ENCODE measurements at regions of chr19 and their contacts with region 1.

Region 1: GRCh38 chr19:45523642-45524256 is 16.5 kb downstream of the VASP start:
- DNase-seq: peak; percentile 55 to 80 (median 77)
- ATAC-seq: peak; percentile 90 to 96 (median 93)
- H3K4me3 ChIP-seq: no peak overlapping the region
- H3K27ac ChIP-seq: no peak overlapping the region
- H3K4me1 ChIP-seq: peaks cover 0 to 26% (median 0%) of the 10 kb centered on the region in 4 donors
- H3K27me3 ChIP-seq: no peaks in the 10 kb centered on the region
- CTCF ChIP-seq: peak; percentile 83 to 92 (median 89)
- POLR2A ChIP-seq: no peak

Region 2: DNA sequence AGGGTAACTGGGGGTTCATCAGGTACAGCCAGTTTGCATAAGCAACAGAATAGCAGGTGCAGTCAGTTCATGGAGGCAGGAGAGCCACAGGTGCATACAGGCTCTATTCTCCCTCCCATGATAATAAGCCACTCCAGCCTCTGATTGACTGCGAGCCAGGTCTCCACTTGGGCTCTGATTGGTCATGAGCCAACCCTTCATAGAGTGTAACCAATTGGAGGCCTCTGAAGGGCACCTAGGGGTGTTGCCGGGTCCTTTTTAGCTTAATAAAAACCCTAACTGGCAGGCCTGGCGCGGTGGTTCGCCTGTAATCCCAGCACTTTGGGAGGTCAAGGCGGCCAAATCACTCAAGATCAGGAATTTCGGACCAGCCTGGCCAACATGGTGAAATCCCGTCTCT is 192.3 kb before region 1 on chr19:
- intact Hi-C with region 1: no loop called
- DNase-seq: no peak
- ATAC-seq: no peak
- H3K4me3 ChIP-seq: no peak overlapping the region
- H3K27ac ChIP-seq: no peak overlapping the region
- H3K4me1 ChIP-seq: no peaks in the 10 kb centered on the region
- H3K27me3 ChIP-seq: no peaks in the 10 kb centered on the region
- CTCF ChIP-seq: no peak
- POLR2A ChIP-seq: no peak

Region 3: DNA sequence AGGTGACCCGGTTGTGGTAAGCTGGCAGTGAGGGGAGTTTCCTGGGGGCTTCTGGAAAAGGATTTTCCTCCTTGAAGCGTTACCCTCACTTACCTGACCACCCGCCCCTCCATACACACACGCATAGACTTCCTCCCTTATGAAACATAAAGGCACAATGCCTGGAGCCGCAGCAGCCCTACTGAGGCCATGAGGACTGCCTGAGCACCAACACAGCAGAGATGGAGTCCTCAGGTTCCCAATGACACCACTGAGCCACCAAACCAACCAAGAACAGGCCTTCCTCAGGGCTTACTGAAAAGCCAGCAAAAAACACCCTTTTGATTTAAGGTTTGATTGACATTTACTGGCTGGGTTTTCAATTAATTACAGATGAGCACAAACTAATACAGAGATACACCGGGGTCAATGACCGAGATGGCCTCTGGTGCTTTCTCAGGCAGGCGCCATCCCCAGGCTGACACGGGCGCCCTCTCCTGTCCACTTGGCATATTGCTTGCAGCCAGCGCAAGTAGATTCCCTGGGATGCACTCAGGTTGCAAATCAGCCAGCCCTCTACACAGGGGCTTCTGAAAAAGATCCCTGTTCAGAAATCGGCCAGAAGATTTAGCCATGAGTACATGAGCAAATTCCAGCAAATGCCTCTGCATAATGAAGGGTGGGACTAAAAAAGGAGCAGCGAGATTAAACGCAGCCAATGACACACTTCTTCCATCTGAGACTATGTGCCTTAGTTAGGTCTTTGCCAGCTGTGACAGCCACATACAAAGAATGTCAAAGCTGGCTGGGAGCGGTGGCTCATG is 46.1 kb after region 1 on chr19:
- intact Hi-C with region 1: loop called (anchors 5 to 10 kb)
- DNase-seq: peak; percentile 76 to 83 (median 82)
- ATAC-seq: peak; percentile 92 to 99 (median 95)
- H3K4me3 ChIP-seq: no peak overlapping the region
- H3K27ac ChIP-seq: peak overlapping the region in 2 of 3 donors; percentile 32 to 34
- H3K4me1 ChIP-seq: peaks cover 0 to 15% (median 3%) of the 10 kb centered on the region in 4 donors
- H3K27me3 ChIP-seq: no peaks in the 10 kb centered on the region
- CTCF ChIP-seq: peak; percentile 81 to 90 (median 86)
- POLR2A ChIP-seq: no peak